Mammary epithelial cell (primary cell): ENCODE measurements at regions of chr4 and their contacts with region 1.

Region 1: GRCh38 chr4:140308366-140309123 is 64.9 kb upstream of the SCOC start:
- DNase-seq: peak; percentile 92
- H3K4me3 ChIP-seq: no peak overlapping the region
- H3K27ac ChIP-seq: peak overlapping the region; percentile 14
- H3K4me1 ChIP-seq: peaks cover 19% of the 10 kb centered on the region
- H3K27me3 ChIP-seq: no peaks in the 10 kb centered on the region
- CTCF ChIP-seq: no peak

Region 2: DNA sequence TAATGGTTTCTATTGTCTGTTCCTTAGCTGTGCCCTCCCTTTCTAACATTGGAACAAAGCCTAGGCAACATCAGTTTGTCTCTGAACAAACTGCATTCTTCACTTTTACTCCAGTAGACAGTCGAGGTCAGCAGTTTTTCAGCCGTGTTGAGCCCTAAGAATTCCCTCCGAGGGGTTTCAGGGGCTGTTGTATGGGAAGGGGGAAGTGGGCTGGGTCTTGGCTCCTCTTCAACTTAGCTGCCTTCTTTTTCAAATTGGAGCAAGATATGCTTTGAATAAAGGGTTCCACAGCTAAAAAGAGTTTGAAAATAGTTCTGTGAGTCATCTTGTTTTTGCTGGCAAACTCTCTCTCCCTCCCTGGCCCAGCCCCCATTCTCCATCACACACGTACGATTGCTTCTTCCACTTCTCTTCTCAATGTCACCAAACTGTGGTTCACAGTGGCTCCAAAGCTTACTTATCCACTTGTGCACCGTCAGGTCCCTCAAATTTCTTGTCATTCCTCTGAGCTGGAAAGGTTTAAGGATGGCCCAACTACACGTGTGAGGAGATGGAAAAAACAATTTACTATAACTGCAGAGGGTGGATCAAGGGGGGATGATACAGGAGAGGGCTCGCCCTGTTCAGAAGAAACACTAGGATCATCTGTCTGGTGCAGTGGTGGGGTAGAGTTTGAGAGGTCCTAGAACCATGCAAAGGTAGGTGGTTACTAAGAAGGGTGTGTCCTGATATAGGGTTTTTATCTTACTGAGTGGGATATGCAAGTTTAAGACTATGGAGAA is 145.3 kb before region 1 on chr4:
- CTCF ChIA-PET with region 1: no interaction called
- dilution Hi-C with region 1: no loop called
- in situ Hi-C with region 1: no loop called
- intact Hi-C with region 1: no loop called
- DNase-seq: peak; percentile 29
- H3K4me3 ChIP-seq: no peak overlapping the region
- H3K27ac ChIP-seq: peak overlapping the region; percentile 37
- H3K4me1 ChIP-seq: peaks cover 13% of the 10 kb centered on the region
- H3K27me3 ChIP-seq: no peaks in the 10 kb centered on the region
- CTCF ChIP-seq: no peak

Region 3: DNA sequence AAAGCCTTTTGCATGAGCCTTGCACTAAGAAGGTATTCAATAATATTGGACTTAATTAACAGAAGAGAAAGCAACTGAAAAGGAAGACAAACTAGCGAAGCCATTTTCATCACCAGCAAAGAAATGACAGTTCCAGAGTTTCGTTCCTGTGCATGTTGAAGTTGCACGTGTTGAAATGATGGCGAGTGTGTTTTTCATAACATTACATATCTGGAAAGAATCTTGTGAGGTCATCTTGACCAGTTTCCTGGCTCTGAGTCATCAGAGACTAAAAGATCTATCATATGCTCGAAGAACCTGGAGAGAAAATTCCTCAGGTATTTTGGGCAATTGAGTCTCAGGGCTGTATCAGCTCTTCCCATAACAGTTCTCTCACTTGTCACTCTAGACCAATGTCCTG is 48.3 kb before region 1 on chr4:
- CTCF ChIA-PET with region 1: no interaction called
- dilution Hi-C with region 1: no loop called
- in situ Hi-C with region 1: no loop called
- intact Hi-C with region 1: loop called (anchors 2 kb)
- DNase-seq: peak; percentile 87
- H3K4me3 ChIP-seq: no peak overlapping the region
- H3K27ac ChIP-seq: no peak overlapping the region
- H3K4me1 ChIP-seq: peaks cover 18% of the 10 kb centered on the region
- H3K27me3 ChIP-seq: no peaks in the 10 kb centered on the region
- CTCF ChIP-seq: no peak

Region 4: DNA sequence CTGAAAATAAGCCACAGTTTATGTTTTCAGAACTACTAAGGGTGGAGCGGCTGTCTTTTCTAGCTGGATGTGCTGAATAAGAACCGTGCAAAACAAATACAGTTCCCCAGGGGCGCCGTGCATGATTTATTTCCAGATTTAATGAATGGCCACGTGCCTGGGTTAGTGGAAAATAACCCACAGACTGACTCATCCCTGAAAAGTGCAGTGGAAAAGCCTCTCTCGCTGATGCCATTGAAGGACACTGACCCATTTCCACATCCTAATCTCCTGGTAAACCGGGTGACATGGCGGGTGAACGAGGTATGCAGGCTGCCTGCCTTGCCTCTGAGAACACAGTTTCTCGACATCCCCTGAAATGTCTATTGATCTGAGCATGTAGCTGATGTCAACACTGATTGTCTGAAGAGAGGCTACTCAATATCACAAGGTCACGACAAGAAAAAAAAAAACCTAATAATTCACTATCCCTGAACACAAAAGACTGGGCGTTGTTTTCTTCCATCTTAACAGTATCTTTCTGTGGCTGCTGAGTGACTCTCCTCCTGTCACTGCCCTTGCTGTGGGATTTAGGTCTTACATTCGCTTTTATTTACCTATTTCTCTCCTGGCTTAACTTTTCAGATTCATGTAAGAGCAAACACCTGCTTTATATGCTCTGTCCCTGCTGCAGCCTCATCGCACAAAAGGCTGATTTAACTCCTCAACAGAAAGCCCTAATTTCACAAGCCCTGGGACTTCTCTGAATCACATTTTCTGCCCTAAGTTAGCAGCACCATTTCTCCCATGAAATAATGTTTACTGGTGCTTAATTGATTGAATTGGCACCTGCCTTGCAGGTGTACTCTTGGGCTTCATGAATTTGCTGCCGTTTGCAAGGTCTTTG is 12.0 kb before region 1 on chr4:
- CTCF ChIA-PET with region 1: interaction called, 11 read pairs
- dilution Hi-C with region 1: no loop called
- in situ Hi-C with region 1: no loop called
- intact Hi-C with region 1: no loop called
- DNase-seq: peak; percentile 42
- H3K4me3 ChIP-seq: no peak overlapping the region
- H3K27ac ChIP-seq: no peak overlapping the region
- H3K4me1 ChIP-seq: peaks cover 30% of the 10 kb centered on the region
- H3K27me3 ChIP-seq: no peaks in the 10 kb centered on the region
- CTCF ChIP-seq: no peak